ENCODE measurements at regions of chr11 and their contacts with region 1.

Region 1: DNA sequence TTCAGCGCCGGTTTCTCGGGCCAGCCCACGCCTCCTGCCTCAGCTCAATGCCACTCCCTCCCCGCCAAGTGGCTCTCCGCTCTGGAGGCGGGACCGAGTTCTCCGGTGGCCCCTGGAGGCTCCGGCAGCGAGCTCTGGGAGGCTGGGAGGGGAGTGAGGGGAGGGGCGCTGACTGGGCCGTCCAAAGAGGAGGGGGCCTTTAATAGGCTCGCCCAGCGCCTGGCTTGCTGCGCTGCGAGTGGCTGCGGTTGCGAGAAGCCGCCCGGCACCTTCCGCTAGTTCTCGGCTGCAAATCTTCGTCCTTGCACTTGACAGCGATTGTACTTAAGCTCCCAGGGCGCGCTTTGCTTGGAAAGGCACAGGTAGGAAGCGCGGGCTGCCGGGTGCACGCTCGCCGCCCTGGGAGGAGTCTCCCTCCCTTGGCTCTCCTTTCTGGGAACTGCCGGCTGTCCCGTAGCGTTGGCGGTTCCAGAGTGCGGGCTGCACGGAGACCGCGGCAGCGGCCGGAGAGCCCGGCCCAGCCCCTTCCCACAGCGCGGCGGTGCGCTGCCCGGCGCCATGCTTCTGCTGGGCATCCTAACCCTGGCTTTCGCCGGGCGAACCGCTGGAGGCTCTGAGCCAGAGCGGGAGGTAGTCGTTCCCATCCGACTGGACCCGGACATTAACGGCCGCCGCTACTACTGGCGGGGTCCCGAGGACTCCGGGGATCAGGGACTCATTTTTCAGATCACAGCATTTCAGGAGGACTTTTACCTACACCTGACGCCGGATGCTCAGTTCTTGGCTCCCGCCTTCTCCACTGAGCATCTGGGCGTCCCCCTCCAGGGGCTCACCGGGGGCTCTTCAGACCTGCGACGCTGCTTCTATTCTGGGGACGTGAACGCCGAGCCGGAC is at the start of gene ADAMTS15:
- DNase-seq: peak; percentile 89 to 94
- ATAC-seq: peak; percentile 86
- H3K4me3 ChIP-seq: peak within 1 kb of the TSS; percentile 30 to 52
- H3K27ac ChIP-seq: peak within 1 kb of the TSS in 1 of 2 donors; percentile 48
- H3K4me1 ChIP-seq: no peaks in the 10 kb centered on the region
- H3K27me3 ChIP-seq: no peaks in the 10 kb centered on the region
- total RNA-seq, gene ADAMTS15: 8.0 to 16.0 TPM

Region 2: GRCh38 chr11:130513132-130513531 is 64.5 kb after region 1 on chr11:
- intact Hi-C with region 1: loop called in 1 of 2 experiments (anchors 5 kb)
- DNase-seq: peak in 1 of 2 donors; percentile 51
- ATAC-seq: peak; percentile 42
- H3K4me3 ChIP-seq: no peak overlapping the region
- H3K27ac ChIP-seq: no peak overlapping the region
- H3K4me1 ChIP-seq: no peaks in the 10 kb centered on the region
- H3K27me3 ChIP-seq: no peaks in the 10 kb centered on the region

Region 3: GRCh38 chr11:130522284-130522961 is 73.8 kb after region 1 on chr11:
- intact Hi-C with region 1: loop called in 1 of 2 experiments (anchors 5 kb)
- DNase-seq: peak; percentile 94 to 96
- ATAC-seq: peak; percentile 94
- H3K4me3 ChIP-seq: no peak overlapping the region
- H3K27ac ChIP-seq: peak overlapping the region in 1 of 2 donors; percentile 70
- H3K4me1 ChIP-seq: peaks cover 0 to 2% of the 10 kb centered on the region in 2 donors
- H3K27me3 ChIP-seq: no peaks in the 10 kb centered on the region

Region 4: DNA sequence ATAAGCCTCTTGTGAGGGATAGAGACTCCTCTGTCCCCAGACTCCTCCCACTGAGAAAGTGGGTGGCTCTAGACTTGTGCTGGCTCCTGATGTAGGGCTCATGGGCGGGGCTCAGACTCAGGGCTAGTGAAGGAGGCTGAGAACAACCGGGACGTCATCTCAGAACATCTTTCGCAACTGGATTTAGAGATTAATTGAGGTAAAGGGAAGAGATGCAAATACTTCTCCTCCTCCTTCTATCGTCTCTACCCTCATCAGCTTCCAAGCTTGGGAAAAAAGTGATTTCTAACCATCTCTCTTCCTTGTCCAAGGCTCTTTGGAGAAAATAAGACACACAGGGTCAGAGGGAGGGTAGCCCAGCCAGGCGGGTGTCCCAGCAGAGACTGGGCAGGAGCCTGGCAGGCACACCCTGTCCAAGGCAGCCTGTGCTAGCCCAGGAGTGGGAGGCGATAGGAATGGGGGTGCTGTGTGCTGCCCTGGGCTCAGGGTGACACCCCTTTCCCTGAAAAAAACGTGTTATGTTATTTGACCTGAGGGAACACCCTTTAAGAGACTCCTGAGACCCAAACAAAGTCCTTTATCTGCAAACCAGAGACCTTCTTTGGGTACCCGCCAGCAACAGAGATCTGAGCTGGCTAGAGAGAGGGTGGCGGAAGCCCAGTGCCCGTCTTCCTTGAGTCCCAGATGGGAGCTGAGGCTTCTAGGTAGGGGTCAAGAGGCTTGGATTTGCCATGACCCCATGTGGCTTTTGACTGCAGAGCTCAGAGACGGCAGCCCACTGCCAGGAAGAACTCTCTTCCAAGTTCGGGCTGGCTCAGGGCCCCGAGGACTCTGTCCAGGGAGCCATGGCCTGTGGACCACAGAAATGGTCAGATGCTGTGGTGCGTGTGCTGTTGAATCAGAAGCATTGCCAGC is 160.7 kb after region 1 on chr11:
- intact Hi-C with region 1: loop called in 1 of 2 experiments (anchors 5 kb)
- DNase-seq: peak; percentile 92
- ATAC-seq: peak; percentile 90
- H3K4me3 ChIP-seq: no peak overlapping the region
- H3K27ac ChIP-seq: peak overlapping the region; percentile 5 to 91
- H3K4me1 ChIP-seq: peaks cover 0 to 3% of the 10 kb centered on the region in 2 donors
- H3K27me3 ChIP-seq: no peaks in the 10 kb centered on the region

Region 5: DNA sequence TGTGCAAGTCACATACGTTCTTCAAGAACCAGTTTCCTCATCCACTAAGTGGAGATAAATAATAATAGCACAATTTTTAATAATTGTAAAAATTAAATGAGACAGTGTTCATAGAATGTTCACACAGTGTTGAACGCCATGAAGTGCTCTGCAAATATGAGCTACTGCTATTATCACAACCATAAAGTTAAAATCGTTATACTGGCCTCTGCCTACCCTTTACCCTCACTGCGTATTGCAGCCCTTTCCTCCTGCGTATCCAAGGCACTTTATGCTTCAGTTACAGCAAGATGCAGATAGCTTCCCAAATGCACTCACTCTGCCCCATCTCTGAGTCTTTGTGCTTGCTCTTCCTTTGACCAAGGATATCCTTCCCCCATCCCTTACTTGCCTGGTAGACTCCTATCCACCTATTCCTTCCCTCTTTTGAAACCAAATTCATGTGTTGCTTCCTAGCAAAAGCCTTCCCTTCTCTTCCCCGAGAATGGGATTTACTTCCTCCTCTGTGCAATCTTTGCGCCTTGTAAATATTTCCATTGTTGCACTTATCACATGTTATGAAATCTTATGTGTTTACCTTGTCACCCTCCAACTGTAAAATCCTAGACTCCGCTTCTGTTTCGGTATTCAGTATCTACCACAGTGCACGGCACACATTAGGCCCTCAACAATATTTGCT is 196.6 kb after region 1 on chr11:
- intact Hi-C with region 1: loop called in 1 of 2 experiments (anchors 5 kb)
- DNase-seq: no peak
- ATAC-seq: no peak
- H3K4me3 ChIP-seq: no peak overlapping the region
- H3K27ac ChIP-seq: no peak overlapping the region
- H3K4me1 ChIP-seq: peaks cover 3 to 5% of the 10 kb centered on the region in 2 donors
- H3K27me3 ChIP-seq: no peaks in the 10 kb centered on the region

Region 6: DNA sequence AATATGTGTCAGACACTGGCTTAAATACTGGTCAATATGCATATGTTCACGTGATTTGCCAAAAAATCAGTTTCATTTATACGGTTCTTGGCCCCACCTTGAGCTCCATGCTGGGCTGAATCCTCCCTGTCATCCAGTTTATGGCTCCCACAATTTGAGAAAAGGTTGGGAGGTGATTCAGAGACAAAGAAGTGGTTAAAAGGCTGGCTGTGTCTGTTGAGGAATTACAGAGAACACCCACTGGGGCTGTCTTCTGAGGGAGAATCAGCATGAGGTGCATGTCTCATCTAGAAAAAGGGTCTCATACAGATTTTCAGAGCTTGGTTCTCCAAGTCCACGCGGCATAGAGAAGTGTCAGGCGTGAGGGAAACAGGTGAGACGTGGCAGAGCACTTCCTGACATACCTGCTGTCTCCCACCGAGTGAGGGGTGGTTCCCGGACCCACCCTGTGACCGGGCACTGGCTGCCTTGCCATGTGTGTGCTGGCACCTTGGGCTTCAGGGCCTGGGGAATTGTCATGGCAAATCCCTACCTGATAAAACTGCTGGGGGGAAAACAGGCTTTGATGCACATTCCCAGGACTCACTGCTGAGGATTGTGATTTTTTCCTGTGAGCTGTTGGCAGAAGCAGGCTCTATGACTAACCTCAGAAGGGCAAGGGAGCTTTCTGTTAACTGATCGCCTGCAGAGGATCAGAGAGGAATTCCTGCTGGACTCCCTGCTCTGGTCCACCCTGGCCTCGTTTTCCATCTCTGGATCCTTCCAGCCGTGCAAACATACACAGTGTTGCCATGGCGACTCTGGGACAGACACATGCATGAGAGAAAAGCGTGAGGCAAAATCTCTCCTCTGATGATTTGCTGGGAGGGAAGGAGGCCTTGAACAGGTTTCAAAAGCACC is 223.4 kb after region 1 on chr11:
- intact Hi-C with region 1: loop called in 1 of 2 experiments (anchors 2 kb)
- DNase-seq: peak; percentile 81 to 85
- ATAC-seq: peak; percentile 73
- H3K4me3 ChIP-seq: no peak overlapping the region
- H3K27ac ChIP-seq: peak overlapping the region in 1 of 2 donors; percentile 92
- H3K4me1 ChIP-seq: peaks cover 6 to 8% of the 10 kb centered on the region in 2 donors
- H3K27me3 ChIP-seq: no peaks in the 10 kb centered on the region

Region 7: DNA sequence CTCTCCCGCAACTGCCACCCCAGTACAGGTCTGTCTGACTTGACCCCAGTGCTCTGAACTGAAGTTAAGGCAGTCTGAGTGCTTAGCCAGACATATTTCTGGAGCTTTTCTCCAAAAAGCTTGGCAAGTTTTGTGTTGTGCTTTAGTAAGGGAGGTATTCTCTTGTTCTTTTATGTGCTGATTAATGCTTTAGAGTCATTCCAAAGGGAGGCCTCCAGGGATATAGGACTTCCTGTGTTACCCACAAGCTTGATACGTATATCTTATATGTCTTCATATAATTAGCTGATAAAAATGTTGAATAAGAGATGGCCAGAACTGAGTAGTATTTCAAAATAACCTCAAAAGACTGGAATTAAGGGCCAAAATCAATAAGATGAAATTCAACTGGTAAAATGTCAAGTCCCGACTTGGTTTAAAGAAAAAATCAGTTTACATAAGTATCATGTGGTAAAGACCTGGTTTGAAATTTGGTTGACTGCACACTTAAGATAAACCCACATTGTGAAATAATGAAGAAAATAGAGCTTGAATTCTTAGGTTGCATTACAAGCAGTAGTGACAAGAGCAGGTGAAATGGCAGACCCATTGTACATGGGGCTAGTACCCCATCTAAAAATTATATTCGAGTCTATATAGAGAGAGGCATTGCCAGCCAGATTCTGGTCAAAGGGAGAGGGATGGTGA is 240.7 kb after region 1 on chr11:
- intact Hi-C with region 1: no loop called
- DNase-seq: no peak
- ATAC-seq: no peak
- H3K4me3 ChIP-seq: no peak overlapping the region
- H3K27ac ChIP-seq: peak overlapping the region in 1 of 2 donors; percentile 17
- H3K4me1 ChIP-seq: no peaks in the 10 kb centered on the region
- H3K27me3 ChIP-seq: no peaks in the 10 kb centered on the region